Left ventricle myocardium superior (tissue), 1 donor: ENCODE measurements at regions of chr9 and their contacts with region 1.

Region 1: DNA sequence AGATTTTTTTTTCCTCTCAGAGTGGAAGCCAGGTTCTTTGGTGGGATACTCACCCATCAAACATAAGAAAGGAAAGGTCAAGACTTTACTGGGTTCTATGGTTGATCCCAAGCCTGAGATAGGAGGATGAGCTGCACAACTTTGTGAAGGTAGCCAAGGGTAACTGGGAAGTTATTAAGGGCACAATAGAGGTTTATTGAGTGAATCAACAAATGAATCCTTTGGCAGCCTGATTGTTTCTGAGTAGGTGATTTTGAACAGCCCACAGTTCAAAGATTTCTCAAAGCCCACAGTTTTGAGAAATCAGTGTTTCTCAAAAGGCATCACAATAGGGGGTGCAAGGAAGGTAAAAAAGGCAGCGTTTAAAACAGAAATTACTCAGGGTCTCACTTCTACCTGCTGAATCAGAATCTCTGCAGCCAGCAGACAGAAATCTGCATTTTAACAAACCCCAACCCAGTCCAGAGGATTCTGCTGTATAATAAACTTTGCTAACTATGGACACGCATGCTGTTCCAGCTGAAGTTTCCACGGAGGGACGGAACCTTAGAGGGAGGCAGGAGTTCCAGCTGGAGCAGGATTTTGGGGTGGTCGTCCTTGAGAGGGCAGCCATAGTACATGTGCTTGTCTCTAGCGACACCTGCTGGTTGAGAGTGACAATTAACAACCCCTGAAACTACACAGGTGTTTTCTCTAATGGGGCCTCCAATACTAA is 32.7 kb upstream of the FSD1L start:
- DNase-seq: no peak
- ATAC-seq: peak; percentile 74

Region 2: GRCh38 chr9:105168870-105169319 is 246.2 kb before region 1 on chr9:
- intact Hi-C with region 1: loop called (anchors 10 kb)
- DNase-seq: no peak
- ATAC-seq: peak; percentile 75

Region 3: DNA sequence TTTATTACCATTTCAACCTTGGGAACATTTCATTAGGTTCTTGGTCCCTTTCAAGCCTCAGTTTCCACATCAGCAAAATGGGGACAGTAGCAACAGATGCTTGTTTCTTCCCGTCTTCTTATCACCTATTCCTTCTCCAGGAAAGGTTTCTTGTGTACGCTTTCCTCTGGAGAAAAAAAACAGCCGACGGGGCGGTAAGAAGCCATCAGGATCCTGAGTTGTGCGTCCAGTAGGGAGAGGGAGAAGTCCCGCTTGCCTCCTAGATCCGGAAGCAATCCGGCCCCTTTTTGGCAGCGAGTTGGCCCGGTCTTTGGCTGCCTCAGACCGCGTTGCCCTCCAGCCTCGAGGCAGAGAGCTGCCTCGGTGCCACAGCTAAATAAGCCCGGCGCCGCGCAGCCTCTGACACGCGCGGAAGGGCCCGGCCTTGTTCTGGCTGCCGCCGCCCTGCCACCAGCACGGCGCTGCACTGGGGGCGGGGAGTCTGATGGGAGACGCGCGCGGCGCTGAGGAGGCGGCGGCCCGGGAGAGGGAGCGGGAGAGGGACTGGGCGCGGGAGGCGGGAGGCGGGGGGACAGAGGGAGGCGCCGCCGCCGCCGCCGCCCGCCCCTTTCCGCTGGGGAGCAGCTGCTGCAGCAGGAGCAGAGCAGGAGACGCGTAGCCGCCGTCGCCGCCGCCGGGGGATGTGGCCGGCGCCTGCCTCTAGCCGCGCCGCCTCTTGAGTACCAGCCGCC is 170.9 kb before region 1 on chr9 and contains the start of gene SLC44A1:
- intact Hi-C with region 1: no loop called
- DNase-seq: peak; percentile 99
- ATAC-seq: peak; percentile 97
- total RNA-seq, gene SLC44A1: 14.3 TPM